AG04449 (cell line): ENCODE measurements at regions of chr19 and their contacts with region 1.

Region 1: GRCh38 chr19:50804420-50805272 is 14.4 kb downstream of the ACP4 start:
- DNase-seq: peak; percentile 93
- H3K4me3 ChIP-seq: peak overlapping the region; percentile 98
- CTCF ChIP-seq: no peak

Region 2: GRCh38 chr19:50794439-50795237 is 10.0 kb before region 1 on chr19:
- CTCF ChIA-PET with region 1: no interaction called
- POLR2A ChIA-PET with region 1: interaction called, 20 read pairs
- DNase-seq: no peak
- H3K4me3 ChIP-seq: no peak overlapping the region
- CTCF ChIP-seq: no peak